Endothelial cell of umbilical vein (primary cell): ENCODE measurements at regions of chr1 and their contacts with region 1.

Region 1: DNA sequence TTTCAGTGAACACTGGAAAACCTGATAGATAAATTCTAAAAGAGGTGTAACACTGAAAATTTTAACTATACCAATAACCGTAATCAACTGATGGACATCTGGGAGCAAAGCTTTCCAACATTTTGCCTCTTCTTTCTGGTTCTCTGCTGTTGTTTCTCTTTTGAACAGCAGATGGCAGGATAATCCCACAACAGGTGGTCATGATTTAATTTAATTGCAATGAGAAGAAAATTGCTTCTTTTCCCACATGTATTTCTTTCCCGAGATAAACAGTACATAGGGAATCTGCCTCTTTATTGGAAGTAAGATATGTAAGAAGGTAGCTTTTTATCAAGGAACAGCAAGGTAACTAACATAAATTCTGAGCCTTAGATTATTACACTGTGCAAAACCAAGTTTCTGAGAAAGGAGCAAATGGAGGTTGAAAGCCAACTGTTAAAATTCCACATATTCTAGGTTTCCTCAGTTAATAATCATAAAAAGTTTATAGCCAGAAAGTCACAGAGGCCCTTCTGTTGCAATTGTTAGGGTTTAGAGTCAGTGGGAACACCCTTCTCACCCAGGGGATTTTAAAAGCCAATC is 72.9 kb downstream of the RPS6KA1 start:
- DNase-seq: peak; percentile 76
- H3K4me3 ChIP-seq: no peak overlapping the region
- H3K27ac ChIP-seq: no peak overlapping the region
- H3K4me1 ChIP-seq: no peaks in the 10 kb centered on the region
- H3K27me3 ChIP-seq: peaks cover 25 to 29% of the 10 kb centered on the region in 2 experiments
- CTCF ChIP-seq: peak; percentile 59 to 60
- POLR2A ChIP-seq: no peak

Region 2: GRCh38 chr1:26500488-26501175 is 101.8 kb before region 1 on chr1:
- CTCF ChIA-PET with region 1: interaction called, 8 read pairs
- POLR2A ChIA-PET with region 1: no interaction called
- dilution Hi-C with region 1: no loop called
- intact Hi-C with region 1: loop called (anchors 2 kb)
- DNase-seq: peak; percentile 75
- H3K4me3 ChIP-seq: peak overlapping the region; percentile 57 to 82 (median 60)
- H3K27ac ChIP-seq: peak overlapping the region; percentile 40
- H3K4me1 ChIP-seq: peaks cover 12% of the 10 kb centered on the region
- H3K27me3 ChIP-seq: no peaks in the 10 kb centered on the region
- CTCF ChIP-seq: no peak
- POLR2A ChIP-seq: no peak

Region 3: DNA sequence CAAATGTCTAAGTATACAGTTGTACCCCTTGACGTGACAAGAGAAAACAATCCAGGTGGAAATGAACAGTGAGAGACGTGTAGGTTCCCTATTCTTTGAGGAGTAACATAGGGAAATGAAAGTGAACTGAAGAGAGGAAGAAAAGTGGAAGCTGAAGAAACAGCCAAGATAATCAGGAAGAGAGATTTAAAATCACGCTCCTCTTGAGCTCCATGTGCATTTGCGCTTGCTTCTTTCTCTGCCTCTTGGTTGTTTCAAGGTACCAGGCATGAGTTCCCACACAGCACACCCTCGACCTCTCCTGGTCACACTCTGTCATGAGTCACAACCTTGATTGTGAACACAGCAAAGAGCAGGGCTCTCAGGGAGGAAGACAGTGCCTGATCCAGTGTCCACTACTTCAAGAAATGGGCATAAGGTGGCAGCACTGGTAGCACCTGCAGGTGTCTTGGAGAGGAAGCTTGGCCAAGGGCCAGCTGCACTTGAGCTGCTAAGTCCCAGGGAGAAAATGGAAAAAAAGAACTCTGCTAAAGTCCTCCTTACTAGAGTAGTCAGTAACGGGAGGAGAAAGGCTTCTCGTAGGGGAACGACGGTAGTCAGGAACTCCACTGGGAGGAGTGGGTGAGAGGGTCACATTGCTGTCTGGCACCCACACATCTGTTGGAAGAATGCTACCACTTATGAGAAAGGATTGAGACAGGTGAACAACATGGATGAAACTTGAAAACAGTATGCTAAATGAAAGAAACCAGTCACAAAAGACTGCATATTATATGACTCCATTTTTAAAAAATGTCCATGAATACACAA is 75.0 kb after region 1 on chr1:
- CTCF ChIA-PET with region 1: interaction called, 22 read pairs
- POLR2A ChIA-PET with region 1: interaction called, 3 read pairs
- dilution Hi-C with region 1: no loop called
- intact Hi-C with region 1: loop called (anchors 1 kb)
- DNase-seq: peak; percentile 88
- H3K4me3 ChIP-seq: no peak overlapping the region
- H3K27ac ChIP-seq: no peak overlapping the region
- H3K4me1 ChIP-seq: peaks cover 7% of the 10 kb centered on the region
- H3K27me3 ChIP-seq: no peaks in the 10 kb centered on the region
- CTCF ChIP-seq: peak; percentile 44 to 66
- POLR2A ChIP-seq: no peak

Region 4: GRCh38 chr1:26787706-26788514 is 185.4 kb after region 1 on chr1 and contains the start of gene PIGV:
- CTCF ChIA-PET with region 1: interaction called, 428 read pairs
- POLR2A ChIA-PET with region 1: no interaction called
- dilution Hi-C with region 1: no loop called
- intact Hi-C with region 1: loop called (anchors 1 kb)
- DNase-seq: peak; percentile 90
- H3K4me3 ChIP-seq: peak within 1 kb of the TSS; percentile 51 to 76 (median 52)
- H3K27ac ChIP-seq: peak within 1 kb of the TSS; percentile 69
- H3K4me1 ChIP-seq: peaks cover 48% of the 10 kb centered on the region
- H3K27me3 ChIP-seq: no peaks in the 10 kb centered on the region
- CTCF ChIP-seq: peak in 1 of 2 donors; percentile 23
- POLR2A ChIP-seq: peak; percentile 91
- total RNA-seq, gene PIGV: 6.0 and 7.5 TPM in 2 replicates

Region 5: GRCh38 chr1:26811057-26811456 is 208.6 kb after region 1 on chr1:
- CTCF ChIA-PET with region 1: interaction called, 37 read pairs
- POLR2A ChIA-PET with region 1: interaction called, 3 read pairs
- dilution Hi-C with region 1: no loop called
- intact Hi-C with region 1: no loop called
- DNase-seq: no peak
- H3K4me3 ChIP-seq: no peak overlapping the region
- H3K27ac ChIP-seq: no peak overlapping the region
- H3K4me1 ChIP-seq: no peaks in the 10 kb centered on the region
- H3K27me3 ChIP-seq: no peaks in the 10 kb centered on the region
- CTCF ChIP-seq: no peak
- POLR2A ChIP-seq: no peak

Region 6: DNA sequence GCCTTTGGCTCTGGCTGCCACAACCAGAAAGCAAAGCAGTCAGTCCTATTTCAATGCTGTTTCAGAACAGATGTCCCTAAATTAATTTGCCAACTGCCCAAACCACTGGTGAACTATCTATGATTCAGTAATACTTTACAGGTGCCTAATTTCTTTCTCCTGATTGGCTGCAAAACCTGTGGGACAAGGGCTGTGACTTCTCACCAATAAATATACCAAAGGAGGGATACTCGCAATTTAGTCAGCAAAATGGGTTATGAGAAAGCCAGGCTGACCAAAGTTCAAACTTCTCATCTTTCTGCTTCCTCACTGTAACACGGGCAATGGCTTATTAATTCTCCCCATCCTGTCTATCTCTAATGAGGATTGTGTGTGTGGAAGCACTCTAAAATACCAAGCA is 274.9 kb after region 1 on chr1:
- CTCF ChIA-PET with region 1: interaction called, 43 read pairs
- POLR2A ChIA-PET with region 1: no interaction called
- dilution Hi-C with region 1: no loop called
- intact Hi-C with region 1: loop called (anchors 1 kb)
- DNase-seq: no peak
- H3K4me3 ChIP-seq: no peak overlapping the region
- H3K27ac ChIP-seq: no peak overlapping the region
- H3K4me1 ChIP-seq: no peaks in the 10 kb centered on the region
- H3K27me3 ChIP-seq: no peaks in the 10 kb centered on the region
- CTCF ChIP-seq: no peak
- POLR2A ChIP-seq: no peak